A673 (cell line): ENCODE measurements at regions of chr19 and their contacts with region 1.

Region 1: DNA sequence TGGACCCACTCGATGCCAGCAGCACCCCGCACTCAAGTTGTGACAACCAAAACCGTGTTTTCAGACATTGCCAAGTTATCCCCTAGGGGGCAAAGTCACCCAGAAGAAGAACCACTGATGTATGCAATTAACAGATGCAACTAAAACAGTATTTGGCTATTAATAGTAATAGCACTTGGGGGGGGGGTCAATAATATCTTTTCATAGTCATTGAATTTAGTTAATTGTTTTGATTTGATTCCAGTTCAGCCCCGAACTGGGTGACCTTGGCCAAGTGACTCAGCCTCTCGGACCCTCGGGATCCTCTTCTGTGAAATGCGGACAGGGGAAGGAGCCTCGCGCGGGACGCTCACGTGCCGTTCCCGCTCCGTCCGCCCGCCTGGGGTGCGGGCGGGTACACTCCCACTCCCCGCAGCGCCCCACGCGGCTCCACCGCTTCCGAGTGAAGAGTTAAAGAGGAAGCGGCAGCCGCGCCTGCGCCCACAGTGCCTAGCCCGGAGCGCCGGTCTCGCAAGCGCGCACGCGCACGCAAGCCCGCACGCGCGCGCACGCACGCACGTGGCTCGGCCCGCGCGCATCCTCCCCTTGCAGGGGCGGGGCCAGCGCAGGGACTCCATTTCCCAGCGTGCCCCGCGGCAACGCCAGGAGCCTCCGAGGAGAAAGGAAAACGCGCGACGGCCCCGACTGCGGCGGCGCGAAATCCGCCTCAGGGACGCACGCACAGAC is 449 bp upstream of the DAZAP1 start:
- DNase-seq: peak; percentile 99
- H3K4me3 ChIP-seq: peak overlapping the region; percentile 46
- H3K27ac ChIP-seq: peak overlapping the region; percentile 66
- H3K4me1 ChIP-seq: peaks cover 22% of the 10 kb centered on the region
- H3K27me3 ChIP-seq: no peaks in the 10 kb centered on the region
- CTCF ChIP-seq: peak; percentile 53

Region 2: DNA sequence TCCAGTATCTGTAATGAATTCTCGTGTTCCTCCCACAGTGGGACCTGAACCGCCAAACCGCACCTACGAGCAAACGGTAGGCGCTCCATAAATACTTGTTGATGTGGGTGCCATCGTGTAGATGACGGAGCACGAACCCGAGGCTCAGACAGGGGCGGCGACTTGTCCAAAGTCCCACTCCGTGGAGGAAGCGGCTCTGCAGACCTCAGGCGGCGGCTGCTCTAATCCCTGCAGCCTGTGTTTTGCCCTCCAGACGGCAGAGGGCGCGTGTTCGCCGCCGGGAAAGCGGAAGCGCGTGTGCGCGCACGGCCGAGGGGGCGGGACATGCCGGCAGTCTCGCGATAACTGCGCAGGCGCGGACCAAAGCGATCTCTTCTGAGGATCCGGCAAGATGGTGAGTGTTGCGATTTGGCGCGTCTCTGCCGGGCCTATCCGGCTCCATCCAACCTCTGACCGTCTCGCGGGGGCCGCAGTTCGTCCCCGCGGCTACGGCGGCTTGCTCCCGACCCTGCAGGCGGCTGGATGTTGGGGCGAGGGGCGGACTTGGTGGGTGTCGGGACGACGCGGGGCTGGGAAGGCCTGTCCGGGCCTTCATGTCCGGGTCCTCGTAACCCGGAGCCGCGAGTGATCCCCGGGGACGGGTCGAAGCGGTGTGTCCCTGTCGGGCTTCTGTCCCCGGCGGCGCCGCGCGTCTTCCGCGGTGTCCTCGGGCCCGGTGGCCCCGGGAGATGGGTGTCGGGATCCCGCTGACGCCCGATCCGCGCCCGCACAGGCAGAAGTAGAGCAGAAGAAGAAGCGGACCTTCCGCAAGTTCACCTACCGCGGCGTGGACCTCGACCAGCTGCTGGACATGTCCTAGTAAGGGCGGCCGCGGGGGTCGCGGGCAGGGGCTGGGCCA is 31.3 kb after region 1 on chr19 and contains the start of gene RPS15:
- CTCF ChIA-PET with region 1: no interaction called
- POLR2A ChIA-PET with region 1: interaction called, 13 read pairs
- intact Hi-C with region 1: no loop called
- DNase-seq: peak; percentile 96
- H3K4me3 ChIP-seq: peak within 1 kb of the TSS; percentile 85
- H3K27ac ChIP-seq: peak within 1 kb of the TSS; percentile 94
- H3K4me1 ChIP-seq: peaks cover 15% of the 10 kb centered on the region
- H3K27me3 ChIP-seq: no peaks in the 10 kb centered on the region
- CTCF ChIP-seq: peak; percentile 97
- total RNA-seq, gene RPS15: 1,685 and 1,696 TPM in 2 replicates

Region 3: GRCh38 chr19:1896508-1896907 is 489.6 kb after region 1 on chr19:
- CTCF ChIA-PET with region 1: no interaction called
- POLR2A ChIA-PET with region 1: interaction called, 17 read pairs
- intact Hi-C with region 1: no loop called
- DNase-seq: no peak
- H3K4me3 ChIP-seq: no peak overlapping the region
- H3K27ac ChIP-seq: no peak overlapping the region
- H3K4me1 ChIP-seq: peaks cover 8% of the 10 kb centered on the region
- H3K27me3 ChIP-seq: no peaks in the 10 kb centered on the region
- CTCF ChIP-seq: no peak